SK-N-SH (cell line): ENCODE measurements at regions of chr14 and their contacts with region 1.

Region 1: DNA sequence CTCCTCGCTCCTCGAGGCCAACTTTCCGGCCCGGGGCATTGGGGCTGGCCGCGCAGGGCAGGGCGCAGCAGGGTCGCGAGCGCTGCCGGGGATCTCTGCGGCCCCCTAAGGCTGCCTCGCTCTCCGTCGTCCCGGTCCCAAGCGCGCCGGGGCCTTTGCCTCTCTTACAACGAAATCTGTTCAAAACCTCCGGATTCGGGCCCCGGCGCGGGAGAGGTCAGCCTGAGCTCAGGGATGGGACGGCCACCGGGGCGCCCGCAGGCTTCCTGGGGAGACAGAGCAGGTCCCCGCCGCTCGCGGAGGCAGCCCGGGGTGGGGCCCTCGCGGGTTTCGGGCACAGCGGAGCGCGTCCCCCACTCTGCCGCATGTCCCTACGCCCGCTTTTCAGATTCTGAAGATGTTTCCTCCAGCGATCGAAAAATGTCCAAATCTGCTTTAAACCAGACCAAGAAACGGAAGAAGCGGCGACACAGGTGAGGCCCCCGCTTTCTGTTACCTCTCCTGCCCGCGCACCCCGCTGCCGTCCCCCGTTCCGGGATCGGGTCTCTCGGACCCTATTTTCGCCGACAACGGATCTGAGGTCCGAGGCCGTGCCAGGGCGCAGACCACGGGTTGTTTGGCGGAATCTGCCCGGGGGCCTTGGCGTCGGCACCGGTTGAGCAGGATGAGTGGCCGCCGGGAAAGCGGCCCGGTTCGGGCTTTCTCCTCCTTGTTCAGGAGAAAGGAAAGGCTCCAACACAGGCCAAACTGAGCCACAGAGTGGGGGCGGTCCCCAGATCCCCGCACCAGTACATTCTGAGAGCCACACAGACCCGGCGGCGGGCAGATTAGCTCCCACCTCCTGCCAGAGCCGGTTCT is 1.8 kb downstream of the VSX2 start:
- DNase-seq: peak; percentile 71
- H3K4me3 ChIP-seq: no peak overlapping the region
- H3K27ac ChIP-seq: no peak overlapping the region
- H3K4me1 ChIP-seq: no peaks in the 10 kb centered on the region; a peak in 1 of 4 replicates
- H3K27me3 ChIP-seq: peaks cover 91% of the 10 kb centered on the region
- CTCF ChIP-seq: no peak
- EP300 ChIP-seq: no peak
- RAD21 ChIP-seq: no peak

Region 2: DNA sequence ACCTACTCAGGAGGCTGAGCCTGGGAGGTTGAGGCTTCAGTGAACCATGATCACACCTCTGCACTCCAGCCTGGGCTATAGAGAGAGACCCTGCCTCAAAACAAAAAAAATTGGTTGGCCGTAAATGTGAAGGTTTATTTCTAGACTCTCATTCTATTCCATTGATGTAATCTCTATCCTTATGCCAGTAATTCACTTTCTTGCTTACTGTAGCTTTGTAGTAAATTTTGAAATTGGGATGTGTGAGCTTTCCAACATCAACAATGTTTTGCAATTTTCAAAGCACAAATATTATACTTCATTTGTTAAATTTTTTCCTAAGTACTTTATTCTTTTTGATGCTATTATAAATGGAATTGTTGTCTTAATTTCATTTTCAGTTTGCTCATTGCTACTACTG is 131.7 kb before region 1 on chr14:
- CTCF ChIA-PET with region 1: interaction called, 18 read pairs
- POLR2A ChIA-PET with region 1: no interaction called
- DNase-seq: no peak
- H3K4me3 ChIP-seq: no peak overlapping the region
- H3K27ac ChIP-seq: no peak overlapping the region
- H3K4me1 ChIP-seq: no peaks in the 10 kb centered on the region
- H3K27me3 ChIP-seq: no peaks in the 10 kb centered on the region
- CTCF ChIP-seq: no peak
- EP300 ChIP-seq: no peak
- RAD21 ChIP-seq: no peak